Activated naive CD4-positive, alpha-beta T cell treated with anti-CD3 and anti-CD28 coated beads for 36 hours (primary cell): ENCODE measurements at regions of chr19 and their contacts with region 1.

Region 1: DNA sequence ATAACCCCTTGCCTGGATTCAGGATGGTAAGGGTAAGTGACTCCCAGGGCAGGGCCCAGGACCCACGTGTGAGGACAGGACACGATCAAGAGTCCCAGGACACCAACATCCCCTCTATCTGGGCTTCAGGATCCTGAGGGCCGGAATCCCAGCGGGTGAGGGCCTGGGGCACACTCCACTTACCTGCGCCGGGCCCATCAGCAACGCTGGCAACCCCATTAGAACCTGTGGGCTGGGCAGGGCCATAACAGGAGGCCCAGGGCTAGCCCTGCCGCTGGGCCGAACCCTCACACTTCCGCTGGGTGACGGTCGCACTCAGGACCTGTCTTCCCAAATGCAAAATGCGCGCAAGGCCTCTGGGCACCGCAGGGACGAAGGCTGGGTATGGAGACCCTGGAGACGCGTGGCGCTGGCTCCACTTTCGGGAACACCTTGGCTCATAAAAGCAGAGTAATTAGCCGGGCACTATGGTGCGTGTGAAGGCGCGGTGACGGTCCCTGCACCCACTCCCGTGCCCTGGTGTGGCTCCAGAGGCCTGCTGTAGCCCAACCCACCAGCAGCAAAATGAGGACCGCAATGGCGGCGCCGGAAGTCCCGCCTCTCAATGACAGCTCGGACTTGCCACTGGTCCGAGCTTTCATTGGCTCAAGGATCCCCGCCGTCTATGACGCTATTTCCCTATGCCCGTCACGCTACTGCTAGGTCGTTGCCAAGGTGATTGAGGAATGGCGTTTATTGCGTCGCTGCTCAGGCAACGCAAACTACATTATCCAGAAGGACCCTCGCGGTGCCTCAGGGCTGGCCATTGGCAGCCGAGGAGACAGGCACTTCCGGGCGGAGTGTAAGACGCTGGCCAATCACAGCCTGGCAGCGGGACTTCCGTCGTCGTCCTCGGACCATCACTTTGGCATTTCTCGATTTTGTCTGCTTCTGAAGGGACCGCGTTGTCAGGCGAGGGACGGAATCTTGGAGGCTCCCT is at the start of gene ZNF132:
- DNase-seq: peak; percentile 98
- H3K4me3 Mint-ChIP-seq: peak within 1 kb of the TSS; percentile 95
- H3K27ac Mint-ChIP-seq: peak within 1 kb of the TSS; percentile 88
- H3K4me1 Mint-ChIP-seq: peaks cover 18% of the 10 kb centered on the region
- H3K27me3 Mint-ChIP-seq: no peaks in the 10 kb centered on the region
- total RNA-seq, gene ZNF132: 2.8 to 2.9 TPM

Region 2: GRCh38 chr19:58228585-58229254 is 211.1 kb before region 1 on chr19 and contains the start of gene ZNF544:
- CTCF ChIA-PET with region 1: no interaction called
- intact Hi-C with region 1: loop called (anchors 5 kb)
- DNase-seq: peak; percentile 76
- H3K4me3 Mint-ChIP-seq: peak within 1 kb of the TSS; percentile 94
- H3K27ac Mint-ChIP-seq: peak within 1 kb of the TSS; percentile 92
- H3K4me1 Mint-ChIP-seq: peaks cover 29% of the 10 kb centered on the region
- H3K27me3 Mint-ChIP-seq: no peaks in the 10 kb centered on the region
- total RNA-seq, gene ZNF544: 32.4 to 35.4 TPM

Region 3: DNA sequence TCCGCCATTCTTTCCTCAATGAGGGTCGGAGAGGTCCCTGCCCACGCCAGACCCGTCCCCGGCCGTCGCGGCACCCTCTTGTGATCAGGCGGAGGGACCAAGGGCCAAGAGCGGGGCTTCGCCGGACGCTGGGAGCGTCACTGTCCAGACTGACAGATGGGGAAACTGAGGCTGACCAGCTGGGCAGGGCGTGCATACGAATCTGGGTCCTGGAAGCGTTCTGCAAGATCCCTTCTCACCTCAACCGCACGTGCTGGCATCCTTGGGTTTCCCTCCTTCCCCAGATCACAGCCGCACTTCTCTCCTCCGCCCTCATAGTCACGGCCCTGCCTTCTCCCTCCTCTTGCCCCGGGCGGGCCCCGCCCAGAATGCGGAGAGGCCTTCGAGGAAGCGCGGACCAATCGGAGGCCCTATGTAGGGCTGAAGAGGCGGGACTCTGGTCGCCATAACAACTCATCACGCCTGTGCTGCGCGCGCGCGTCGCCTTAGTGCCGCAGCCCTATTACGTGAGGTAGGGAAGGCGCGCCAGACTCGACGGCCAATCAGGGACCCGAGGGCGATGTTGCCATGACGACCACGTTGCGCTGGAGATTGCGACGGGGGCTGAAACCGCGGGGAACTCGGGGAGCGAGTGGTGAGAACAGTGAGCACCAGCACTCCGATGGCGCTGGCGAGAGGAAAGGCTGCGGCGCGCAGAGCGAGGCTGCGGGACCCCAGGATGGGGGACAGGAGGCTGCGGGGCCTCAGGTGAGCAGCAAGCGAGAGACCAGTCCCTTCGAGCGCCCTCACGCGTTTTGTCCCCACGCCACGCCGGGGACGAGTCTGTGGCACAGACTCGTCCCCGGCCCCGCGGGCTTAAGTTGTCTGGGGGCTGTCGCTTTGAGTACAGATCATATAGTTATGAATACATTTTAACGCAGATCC is 38.7 kb before region 1 on chr19:
- CTCF ChIA-PET with region 1: no interaction called
- intact Hi-C with region 1: loop called (anchors 1 kb)
- DNase-seq: peak; percentile 99
- H3K4me3 Mint-ChIP-seq: peak overlapping the region; percentile 94
- H3K27ac Mint-ChIP-seq: peak overlapping the region; percentile 26
- H3K4me1 Mint-ChIP-seq: peaks cover 9% of the 10 kb centered on the region
- H3K27me3 Mint-ChIP-seq: peaks cover 11% of the 10 kb centered on the region

Region 4: DNA sequence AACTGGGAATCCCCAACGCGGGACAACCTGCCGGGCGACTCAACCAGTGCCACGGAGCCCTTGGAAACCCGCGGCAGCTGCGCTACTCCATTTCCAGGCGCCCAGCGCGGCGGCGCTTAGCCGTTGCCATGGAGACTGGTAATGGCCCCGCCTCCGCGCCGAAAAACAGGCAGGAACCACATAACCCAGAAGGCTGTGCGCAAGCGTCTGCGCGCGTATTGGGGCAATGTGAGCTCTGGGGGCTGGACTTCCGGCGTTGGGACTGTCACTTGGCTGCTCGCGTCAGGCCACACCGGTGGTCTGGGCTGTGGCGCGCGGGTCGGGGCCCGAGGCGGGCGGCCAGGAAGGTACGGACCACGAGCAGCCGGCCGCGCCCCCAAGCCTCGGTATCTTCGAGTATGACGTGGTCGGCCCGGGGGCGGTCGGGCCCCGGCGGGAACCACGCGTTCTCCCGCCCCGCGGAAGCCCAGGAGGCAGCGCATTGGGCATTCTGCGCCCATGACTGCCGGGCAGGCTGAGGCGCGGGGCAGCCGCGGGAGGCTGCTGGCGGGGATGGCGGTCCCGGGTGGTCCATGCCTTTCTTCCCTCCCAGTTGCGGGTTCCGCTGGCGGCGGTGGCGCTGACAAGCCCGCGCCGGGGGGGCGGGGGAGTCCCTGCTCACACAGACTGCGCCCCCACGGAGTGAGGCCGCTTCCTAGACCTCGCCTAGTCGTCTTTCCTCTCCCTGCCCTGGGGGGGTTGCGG is 11.7 kb after region 1 on chr19 and contains the start of gene ZNF324B:
- CTCF ChIA-PET with region 1: no interaction called
- intact Hi-C with region 1: loop called (anchors 1 kb)
- DNase-seq: peak; percentile 97
- H3K4me3 Mint-ChIP-seq: peak within 1 kb of the TSS; percentile 79
- H3K27ac Mint-ChIP-seq: no peak within 1 kb of the TSS
- H3K4me1 Mint-ChIP-seq: peaks cover 21% of the 10 kb centered on the region
- H3K27me3 Mint-ChIP-seq: peaks cover 11% of the 10 kb centered on the region
- total RNA-seq, gene ZNF324B: 5.8 to 6.2 TPM

Region 5: DNA sequence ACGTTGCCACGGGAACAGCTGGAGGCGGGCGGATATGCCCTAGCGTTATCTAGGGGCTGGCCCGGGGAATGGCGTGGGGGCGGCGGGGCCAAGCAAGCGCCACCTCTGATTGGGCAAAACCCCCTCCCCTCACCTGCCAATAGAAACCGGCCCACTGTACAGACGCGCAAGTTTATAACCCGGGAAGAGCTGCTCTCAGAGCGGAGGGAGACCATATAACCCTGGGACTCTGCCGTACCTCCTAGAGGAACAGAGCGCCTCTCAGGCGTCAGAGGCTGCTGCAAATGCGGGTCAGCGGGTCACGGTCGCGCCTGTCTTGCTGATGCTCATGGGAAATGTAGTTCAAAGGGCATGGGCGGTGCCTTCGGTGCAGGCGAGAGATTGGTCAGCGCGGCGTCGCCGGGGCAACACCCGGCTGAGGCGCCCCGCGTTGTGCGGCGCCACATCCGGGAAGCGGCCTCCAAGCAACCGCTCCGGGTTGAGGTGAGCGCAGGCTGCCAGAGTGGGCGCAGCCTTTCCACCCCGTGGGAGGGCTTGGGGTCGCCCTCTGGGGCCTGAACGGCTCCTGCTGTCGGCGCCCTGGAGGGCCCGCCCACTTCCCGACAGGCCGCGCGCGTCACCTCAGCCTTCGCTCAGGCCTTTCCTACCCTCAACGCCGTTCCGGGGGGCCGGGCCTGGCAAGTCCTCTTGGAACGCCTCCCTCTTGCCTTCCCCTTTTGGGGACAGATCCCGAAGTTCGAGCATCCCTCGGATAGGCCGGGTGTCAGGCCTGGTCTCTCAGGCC is 36.0 kb after region 1 on chr19 and contains the start of gene ZNF446:
- CTCF ChIA-PET with region 1: no interaction called
- intact Hi-C with region 1: loop called (anchors 1 kb)
- DNase-seq: peak; percentile 97
- H3K4me3 Mint-ChIP-seq: peak within 1 kb of the TSS; percentile 94
- H3K27ac Mint-ChIP-seq: peak within 1 kb of the TSS; percentile 97
- H3K4me1 Mint-ChIP-seq: peaks cover 13% of the 10 kb centered on the region
- H3K27me3 Mint-ChIP-seq: no peaks in the 10 kb centered on the region
- total RNA-seq, gene ZNF446: 2.6 to 2.9 TPM

Region 6: GRCh38 chr19:58492265-58492664 is 52.4 kb after region 1 on chr19:
- CTCF ChIA-PET with region 1: no interaction called
- intact Hi-C with region 1: no loop called
- DNase-seq: no peak
- H3K4me3 Mint-ChIP-seq: no peak overlapping the region
- H3K27ac Mint-ChIP-seq: no peak overlapping the region
- H3K4me1 Mint-ChIP-seq: peaks cover 19% of the 10 kb centered on the region
- H3K27me3 Mint-ChIP-seq: no peaks in the 10 kb centered on the region

Region 7: DNA sequence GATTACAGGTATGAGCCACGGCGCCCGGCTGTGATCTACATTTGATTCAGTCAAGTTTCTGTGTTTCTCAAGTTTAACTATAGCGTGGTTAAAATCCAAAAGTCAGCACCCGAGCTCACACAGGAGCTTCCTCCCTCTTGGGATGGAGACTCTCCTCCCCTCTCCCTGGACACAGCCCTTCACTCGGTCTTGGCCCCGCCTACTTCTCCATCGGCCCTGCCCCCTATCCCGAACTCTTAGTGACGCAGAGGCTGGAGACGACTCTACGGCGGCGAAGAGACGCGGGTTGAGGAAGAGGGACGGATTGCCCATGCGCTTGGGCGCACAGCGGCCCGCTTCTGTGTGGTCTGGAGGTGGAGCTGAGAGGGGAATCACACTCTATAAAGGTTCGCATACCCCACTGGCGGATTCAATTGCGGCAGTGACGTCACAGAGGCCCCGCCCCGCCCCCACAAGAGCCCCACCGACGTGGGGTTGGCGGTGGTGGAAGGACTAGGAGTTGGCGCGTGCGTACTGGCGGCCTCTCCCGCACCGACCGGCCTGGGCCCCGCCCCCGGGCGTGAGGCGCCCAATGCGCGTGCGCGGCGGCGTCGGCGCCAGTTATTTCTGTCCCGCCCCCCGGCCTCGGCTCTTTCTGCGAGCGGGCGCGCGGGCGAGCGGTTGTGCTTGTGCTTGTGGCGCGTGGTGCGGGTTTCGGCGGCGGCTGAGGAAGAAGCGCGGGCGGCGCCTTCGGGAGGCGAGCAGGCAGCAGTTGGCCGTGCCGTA is 104.1 kb after region 1 on chr19 and contains the start of gene TRIM28:
- CTCF ChIA-PET with region 1: no interaction called
- intact Hi-C with region 1: no loop called
- DNase-seq: peak; percentile 100
- H3K4me3 Mint-ChIP-seq: peak within 1 kb of the TSS; percentile 97
- H3K27ac Mint-ChIP-seq: peak within 1 kb of the TSS; percentile 97
- H3K4me1 Mint-ChIP-seq: peaks cover 30% of the 10 kb centered on the region
- H3K27me3 Mint-ChIP-seq: peaks cover 15% of the 10 kb centered on the region
- total RNA-seq, gene TRIM28: 475 to 483 TPM